RWPE1 (cell line): ENCODE measurements at regions of chr6 and their contacts with region 1.

Region 1: GRCh38 chr6:31815025-31815838 is at the starts of genes HSPA1A and HSPA1L:
- DNase-seq: peak; percentile 99
- H3K27ac ChIP-seq: peak within 1 kb of the TSS; percentile 100
- CTCF ChIP-seq: no peak

Region 2: DNA sequence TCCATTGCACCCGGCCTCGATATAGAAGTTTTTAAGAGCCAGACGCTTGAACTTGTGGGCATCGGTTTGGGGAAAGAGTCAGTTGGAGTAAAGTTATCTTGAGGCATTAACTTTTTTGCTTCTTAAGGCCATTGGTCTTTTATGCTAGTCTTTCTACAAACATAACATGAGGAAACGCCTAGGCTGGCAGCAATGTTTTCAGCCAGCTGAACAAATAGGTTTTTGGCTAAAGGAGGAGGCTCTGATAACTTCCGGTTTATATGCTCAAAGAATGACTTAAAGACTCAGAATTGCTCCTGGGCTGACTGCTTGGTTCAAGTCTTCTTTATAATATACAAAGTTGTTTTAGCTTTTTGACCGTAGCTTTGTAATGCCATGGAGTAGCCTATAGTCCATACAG is 589.5 kb before region 1 on chr6:
- CTCF ChIA-PET with region 1: no interaction called
- POLR2A ChIA-PET with region 1: no interaction called
- DNase-seq: no peak
- H3K27ac ChIP-seq: no peak overlapping the region
- CTCF ChIP-seq: no peak

Region 3: DNA sequence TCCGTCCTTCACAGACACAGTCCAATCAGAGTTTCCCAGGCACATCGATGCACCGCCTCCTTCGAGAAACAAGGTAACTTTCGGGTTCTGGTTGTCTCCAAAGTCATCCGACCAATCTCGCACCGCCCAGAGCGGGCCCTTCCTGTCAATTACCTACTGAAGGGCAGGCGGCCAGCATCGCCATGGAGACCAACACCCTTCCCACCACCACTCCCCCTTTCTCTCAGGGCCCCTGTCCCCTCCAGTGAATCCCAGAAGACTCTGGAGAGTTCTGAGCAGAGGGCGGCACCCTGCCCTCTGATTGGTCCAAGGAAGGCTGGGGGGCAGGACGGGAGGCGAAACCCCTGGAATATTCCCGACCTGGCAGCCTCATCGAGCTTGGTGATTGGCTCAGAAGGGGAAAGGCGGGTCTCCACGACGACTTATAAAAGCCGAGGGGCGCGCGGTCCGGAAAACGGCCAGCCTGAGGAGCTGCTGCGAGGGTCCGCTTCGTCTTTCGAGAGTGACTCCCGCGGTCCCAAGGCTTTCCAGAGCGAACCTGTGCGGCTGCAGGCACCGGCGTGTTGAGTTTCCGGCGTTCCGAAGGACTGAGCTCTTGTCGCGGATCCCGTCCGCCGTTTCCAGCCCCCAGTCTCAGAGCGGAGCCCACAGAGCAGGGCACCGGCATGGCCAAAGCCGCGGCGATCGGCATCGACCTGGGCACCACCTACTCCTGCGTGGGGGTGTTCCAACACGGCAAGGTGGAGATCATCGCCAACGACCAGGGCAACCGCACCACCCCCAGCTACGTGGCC is 12.3 kb after region 1 on chr6 and contains the start of gene HSPA1B:
- CTCF ChIA-PET with region 1: interaction called, 11 read pairs
- POLR2A ChIA-PET with region 1: interaction called, 32 read pairs
- DNase-seq: peak; percentile 100
- H3K27ac ChIP-seq: peak within 1 kb of the TSS; percentile 95
- CTCF ChIP-seq: no peak

Region 4: DNA sequence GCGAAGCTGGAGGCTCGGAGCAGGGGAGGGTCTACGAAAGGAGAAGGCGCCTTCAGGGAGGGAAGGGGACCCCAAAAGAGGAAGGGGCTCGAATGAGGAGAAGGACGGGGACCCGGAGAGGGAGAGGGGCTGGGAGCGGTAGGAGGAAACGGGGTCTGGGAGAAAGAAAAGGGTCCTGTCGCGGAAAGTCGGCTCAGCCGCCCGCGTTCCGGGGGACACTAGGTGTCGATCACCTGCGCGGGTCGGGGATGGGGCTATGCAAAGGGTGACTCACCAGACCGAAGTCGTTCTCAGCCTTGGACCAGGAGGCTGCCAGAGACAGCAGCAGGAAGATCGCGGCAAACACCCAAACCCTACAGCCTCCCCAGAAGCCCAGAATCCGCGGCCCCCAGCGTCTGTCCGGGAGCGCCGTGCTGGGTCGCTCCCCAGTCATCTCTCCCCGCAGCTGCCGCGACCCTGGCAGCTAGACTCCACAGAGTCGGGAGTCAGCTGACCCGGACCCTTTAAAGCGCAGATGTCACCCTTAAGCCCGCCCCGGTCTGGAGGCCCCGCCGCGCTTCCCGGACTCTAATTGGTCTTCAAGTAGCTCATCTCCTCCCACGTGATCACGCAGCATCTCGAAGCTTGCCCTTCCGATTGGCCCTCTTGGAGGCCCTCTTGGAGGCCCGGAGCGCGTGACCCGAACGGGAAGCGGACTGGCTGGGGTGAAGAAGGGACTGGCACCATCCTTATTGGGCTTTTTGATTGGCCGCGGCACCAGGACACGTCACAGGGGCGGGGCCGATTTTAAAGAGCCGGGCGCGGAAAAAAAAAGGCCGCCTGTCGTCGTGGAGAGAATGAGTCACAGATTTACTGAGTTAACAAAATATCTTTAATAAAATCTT is 47.4 kb after region 1 on chr6 and contains the start of gene NEU1:
- CTCF ChIA-PET with region 1: no interaction called
- POLR2A ChIA-PET with region 1: no interaction called
- DNase-seq: peak; percentile 100
- H3K27ac ChIP-seq: peak within 1 kb of the TSS; percentile 85
- CTCF ChIP-seq: no peak